Dendritic cell treated with granulocyte-macrophage colony-stimulating factor and Interleukin-4, amounts not matched to agents 40 ng/mL and 50 ng/mL, for 4 days (primary cell): ENCODE measurements at regions of chr5 and their contacts with region 1.

Region 1: DNA sequence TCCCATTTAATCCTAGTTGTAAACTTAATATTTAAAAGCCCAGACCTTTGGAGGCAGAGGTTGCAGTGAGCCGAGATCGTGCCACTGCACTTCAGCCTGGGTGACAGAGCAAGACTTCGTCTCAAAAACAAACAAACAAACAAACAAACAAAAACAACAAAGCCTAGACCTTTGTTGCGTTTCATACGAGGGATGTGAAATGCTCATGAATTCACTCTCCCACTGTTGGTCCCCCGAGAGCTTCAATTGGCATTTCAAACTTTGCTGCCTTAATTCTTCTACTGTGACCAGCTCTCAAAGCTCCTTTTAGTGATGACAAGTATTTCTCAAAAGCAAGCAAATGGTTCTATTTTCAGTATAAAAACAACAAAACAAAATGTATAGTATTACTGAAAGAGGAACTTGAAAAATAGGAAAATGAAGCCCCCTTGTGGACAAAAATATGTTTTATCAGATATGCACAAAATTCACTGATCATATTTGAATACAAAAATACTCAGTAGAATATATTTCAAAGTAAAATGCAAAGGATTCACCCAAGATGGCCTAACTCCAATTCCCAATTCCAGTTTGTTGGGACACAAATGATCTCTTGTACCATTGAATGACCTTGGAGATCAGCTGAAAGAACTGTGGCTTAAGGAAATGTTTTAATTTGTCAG is 140.4 kb downstream of the ESM1 start:
- H3K4me3 Mint-ChIP-seq: peak overlapping the region; percentile 34
- H3K27ac Mint-ChIP-seq: peak overlapping the region; percentile 60
- H3K4me1 Mint-ChIP-seq: peaks cover 26% of the 10 kb centered on the region
- H3K27me3 Mint-ChIP-seq: peaks cover 2% of the 10 kb centered on the region

Region 2: GRCh38 chr5:54703133-54703532 is 141.9 kb before region 1 on chr5:
- intact Hi-C with region 1: loop called (anchors 10 kb)
- H3K4me3 Mint-ChIP-seq: no peak overlapping the region
- H3K27ac Mint-ChIP-seq: no peak overlapping the region
- H3K4me1 Mint-ChIP-seq: peaks cover 58% of the 10 kb centered on the region
- H3K27me3 Mint-ChIP-seq: no peaks in the 10 kb centered on the region

Region 3: DNA sequence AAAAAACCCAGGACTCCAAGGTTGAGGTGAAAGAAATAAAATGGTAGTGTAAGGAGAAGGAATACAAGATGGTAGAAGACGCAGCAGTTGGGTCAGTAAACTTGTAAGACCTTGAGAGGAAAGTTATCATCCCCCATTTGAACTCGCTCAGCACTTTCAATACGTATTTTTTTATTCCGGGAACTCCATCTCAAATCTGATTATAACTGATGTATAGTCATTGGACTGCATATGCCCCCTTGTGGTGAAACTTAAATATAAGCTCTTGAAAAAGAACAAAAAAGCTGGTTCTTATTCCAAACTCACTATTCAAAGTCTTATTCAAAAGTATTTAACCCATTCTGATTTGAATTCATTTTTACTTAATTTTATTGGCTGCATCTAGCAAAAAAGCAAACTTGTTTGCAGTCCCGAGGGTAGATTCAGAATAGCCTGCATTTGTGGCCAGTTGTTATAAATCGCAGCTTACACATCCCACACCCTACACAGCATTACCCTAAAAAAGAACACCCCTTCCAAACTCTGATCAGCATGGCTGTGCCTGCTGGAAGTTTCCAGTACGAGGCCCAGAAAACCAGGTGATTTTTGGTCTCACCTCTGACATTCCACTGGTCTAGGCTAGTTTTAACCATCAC is 22.4 kb after region 1 on chr5:
- intact Hi-C with region 1: loop called (anchors 1 kb)
- H3K4me3 Mint-ChIP-seq: peak overlapping the region; percentile 36
- H3K27ac Mint-ChIP-seq: no peak overlapping the region
- H3K4me1 Mint-ChIP-seq: peaks cover 5% of the 10 kb centered on the region
- H3K27me3 Mint-ChIP-seq: peaks cover 11% of the 10 kb centered on the region

Region 4: DNA sequence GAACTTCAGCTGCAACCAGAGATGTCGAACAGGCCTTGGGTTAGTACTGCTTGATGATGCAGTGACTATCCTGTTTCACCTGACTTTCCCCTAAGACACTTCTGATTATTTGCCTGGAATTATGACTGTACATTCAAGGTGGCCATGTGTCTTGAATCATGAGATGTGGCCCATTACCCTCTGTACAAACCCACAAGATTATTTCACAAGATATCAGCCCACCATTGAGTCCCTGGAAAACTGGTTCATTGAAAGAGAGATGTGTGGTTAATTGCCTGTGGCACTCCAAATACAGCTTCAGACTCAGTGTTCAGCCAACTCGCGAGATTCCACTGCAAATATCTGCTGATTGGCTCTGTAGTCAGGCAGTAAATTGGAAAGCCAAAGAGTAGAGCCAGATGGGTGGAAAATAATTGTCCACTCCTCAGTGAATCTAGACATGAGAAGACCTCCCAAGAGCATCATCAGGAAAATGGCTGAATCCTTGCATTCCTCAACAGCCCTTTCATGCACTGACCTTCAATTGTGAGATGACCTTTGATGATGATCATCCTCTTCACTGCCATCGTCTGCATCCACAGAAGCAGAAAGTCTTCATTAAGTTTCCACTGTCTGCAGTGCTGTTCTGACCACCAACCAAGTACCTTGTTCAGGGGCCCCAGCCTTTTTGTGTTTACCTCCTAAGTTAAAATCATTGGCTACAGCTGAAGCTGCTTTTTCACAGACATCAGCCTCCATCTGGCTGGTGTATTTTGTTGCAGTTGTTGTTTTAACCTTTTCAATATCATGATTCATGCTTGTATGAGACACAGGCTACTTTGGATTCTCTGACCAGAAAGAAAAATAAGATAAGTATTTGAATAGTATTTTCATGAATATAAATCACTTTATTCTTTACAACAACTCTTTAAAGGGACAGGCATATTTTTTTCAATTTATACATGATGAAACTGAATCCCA is 65.2 kb after region 1 on chr5:
- intact Hi-C with region 1: no loop called
- H3K4me3 Mint-ChIP-seq: no peak overlapping the region
- H3K27ac Mint-ChIP-seq: no peak overlapping the region
- H3K4me1 Mint-ChIP-seq: no peaks in the 10 kb centered on the region
- H3K27me3 Mint-ChIP-seq: peaks cover 19% of the 10 kb centered on the region